Activated T-helper 1 cell treated with anti-CD3 and anti-CD28 coated beads, Interleukin-12 subunit alpha, Interleukin-12 subunit beta, Interleukin-2, Interleukin-4 antibody, amounts not matched to agents 30 ng/mL and 10 ng/mL and 1 ng/mL, durations not matched to agents 14 hours and 24 hours and 36 hours (primary cell): ENCODE measurements at regions of chr22 and their contacts with region 1.

Region 1: GRCh38 chr22:37218771-37219411 is 6.6 kb upstream of the SSTR3 start:
- DNase-seq: peak; percentile 72
- H3K4me3 Mint-ChIP-seq: peak overlapping the region; percentile 79
- H3K27ac Mint-ChIP-seq: peak overlapping the region; percentile 96
- H3K4me1 Mint-ChIP-seq: peaks cover 68% of the 10 kb centered on the region
- H3K27me3 Mint-ChIP-seq: no peaks in the 10 kb centered on the region

Region 2: DNA sequence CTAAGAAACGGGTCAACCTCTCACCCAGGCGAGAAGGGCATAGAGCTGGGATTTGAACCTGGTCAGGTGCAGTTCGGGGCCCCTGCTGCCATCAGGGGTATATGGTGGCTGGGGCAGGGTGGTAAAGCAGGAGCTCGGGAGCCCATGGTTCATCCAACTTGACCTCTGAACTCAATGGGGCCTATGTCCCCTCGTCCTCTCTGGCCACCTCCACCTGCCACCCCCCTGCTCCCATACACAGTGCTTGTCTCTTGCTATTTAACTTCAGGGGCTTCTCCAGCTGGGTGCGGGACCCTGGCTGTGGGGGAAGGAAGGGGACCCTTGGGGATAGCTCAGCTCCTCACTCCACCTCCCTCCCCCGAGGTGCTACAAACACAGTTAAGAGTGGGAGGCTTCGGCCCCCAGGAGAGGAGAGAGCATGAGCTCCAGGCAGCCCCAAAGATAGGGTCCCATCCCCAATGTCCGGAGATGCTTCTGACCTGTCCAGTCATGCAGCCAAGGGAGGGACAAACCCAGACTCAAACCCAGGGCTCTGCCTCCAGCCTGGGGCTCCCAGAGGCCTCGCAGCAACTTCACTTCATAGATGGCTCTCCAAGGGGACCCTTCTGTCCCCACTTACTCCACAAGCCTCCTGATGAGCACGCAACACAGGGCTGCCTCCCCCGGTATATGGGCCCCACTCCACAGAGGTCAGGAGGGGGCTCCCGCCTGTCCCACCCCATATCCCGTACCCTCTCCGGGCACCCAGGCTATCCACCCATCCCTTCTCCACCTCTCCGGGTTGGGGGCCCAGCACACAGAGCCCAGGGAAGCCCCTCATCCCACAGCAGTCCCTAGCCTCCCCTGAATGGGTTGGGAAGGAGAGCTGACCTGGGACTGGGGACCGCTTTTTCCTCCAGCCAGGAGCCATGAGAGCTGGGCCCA is 69.9 kb before region 1 on chr22:
- intact Hi-C with region 1: loop called (anchors 2 kb)
- DNase-seq: no peak
- H3K4me3 Mint-ChIP-seq: peak overlapping the region; percentile 92
- H3K27ac Mint-ChIP-seq: peak overlapping the region; percentile 93
- H3K4me1 Mint-ChIP-seq: peaks cover 72% of the 10 kb centered on the region
- H3K27me3 Mint-ChIP-seq: no peaks in the 10 kb centered on the region

Region 3: DNA sequence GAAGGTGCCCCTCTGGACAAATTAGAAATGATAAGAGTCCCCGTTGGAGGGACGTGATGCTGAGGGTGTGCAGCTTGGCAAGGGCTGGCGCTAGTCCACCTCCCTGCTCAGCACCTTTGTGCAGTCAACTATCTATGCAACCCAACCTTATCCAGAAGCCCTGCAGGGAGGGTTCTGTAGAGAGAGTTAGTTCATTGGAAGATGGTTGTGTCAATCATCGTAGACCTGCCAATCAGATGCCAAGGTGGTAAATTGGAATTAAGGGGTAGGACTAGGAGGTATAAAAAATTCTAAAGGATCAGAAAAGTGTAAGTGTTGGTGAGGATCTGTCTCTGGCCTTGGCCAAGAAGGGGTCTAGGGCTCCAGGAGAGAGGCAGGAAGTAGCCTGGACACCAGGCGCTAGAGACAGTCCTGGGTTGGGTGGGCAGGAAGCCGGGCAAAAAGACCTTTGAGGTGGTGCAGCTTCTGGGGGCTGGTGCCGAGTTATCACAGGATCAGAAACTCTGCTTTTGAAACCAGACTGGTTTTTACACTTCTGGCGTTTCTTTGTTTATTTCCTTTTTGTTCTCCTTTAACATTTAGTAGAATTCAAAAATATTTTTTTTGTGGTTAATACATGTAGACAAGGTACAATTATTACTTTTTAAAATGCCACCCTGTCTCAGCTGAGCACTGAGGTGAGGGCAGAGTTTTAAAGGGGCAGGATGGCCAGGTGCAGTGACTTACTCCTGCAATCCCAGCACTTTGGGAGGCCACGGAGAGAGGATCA is 32.5 kb before region 1 on chr22:
- intact Hi-C with region 1: no loop called
- DNase-seq: peak; percentile 31
- H3K4me3 Mint-ChIP-seq: peak overlapping the region; percentile 72
- H3K27ac Mint-ChIP-seq: peak overlapping the region; percentile 86
- H3K4me1 Mint-ChIP-seq: peaks cover 36% of the 10 kb centered on the region
- H3K27me3 Mint-ChIP-seq: no peaks in the 10 kb centered on the region

Region 4: GRCh38 chr22:37274380-37274862 is 55.5 kb after region 1 on chr22:
- intact Hi-C with region 1: loop called (anchors 2 kb)
- DNase-seq: no peak
- H3K4me3 Mint-ChIP-seq: no peak overlapping the region
- H3K27ac Mint-ChIP-seq: no peak overlapping the region
- H3K4me1 Mint-ChIP-seq: peaks cover 50% of the 10 kb centered on the region
- H3K27me3 Mint-ChIP-seq: peaks cover 4% of the 10 kb centered on the region